H1 (cell line): ENCODE measurements at regions of chr20 and their contacts with region 1.

Region 1: DNA sequence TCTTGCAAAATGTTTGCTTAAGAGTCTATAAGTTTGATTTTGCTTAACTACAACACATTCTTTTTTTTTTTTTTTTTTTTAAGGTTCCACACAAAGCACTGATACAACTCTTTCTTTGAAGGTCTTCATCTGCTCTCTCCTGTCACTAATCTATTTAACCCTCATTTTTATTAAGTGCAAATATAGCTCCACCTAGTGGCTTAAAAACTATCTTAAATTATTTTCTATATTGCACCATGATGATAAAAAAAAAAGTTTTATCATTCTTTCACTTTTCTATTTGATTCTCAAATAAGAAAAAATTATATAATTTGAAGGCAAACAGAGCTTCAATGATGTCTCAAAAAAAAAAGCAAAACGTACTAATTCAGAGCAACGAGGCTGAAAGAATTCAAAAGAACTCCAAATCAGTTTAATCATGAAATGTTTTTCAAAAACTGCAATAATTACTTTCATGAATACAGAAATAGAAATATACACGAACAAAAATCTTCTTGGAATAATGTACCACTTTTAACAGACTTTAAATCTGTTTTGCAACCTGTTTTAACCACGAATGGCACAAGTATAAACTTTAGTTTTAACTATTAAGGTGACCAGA is 12.8 kb downstream of the ESF1 start:
- DNase-seq: no peak
- H3K4me3 ChIP-seq: no peak overlapping the region
- H3K27ac ChIP-seq: no peak overlapping the region
- H3K4me1 ChIP-seq: no peaks in the 10 kb centered on the region
- H3K27me3 ChIP-seq: peaks cover 0 to 1% (median 0%) of the 10 kb centered on the region in 4 experiments; a peak in 1 of 7 replicates
- CTCF ChIP-seq: no peak
- EP300 ChIP-seq: no peak
- POLR2A ChIP-seq: no peak
- RAD21 ChIP-seq: no peak

Region 2: DNA sequence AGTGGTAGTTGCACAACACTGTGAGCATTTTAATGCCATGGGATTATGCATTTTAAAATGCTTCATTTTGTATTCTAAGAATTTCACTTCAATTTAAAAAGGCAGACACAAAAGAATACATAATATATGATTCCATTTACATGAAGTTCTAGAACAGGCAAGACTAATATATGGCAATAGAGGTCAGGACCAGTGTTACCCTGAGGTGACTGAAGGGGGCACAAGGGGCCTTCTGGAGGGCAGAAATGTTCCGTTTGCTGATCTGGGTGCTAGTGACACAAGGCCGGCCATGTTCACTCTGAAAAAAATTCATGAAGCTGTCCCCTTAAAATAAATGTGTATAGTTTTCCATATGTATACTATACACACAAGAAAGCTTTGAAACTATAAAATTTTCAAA is 161.8 kb before region 1 on chr20:
- CTCF ChIA-PET with region 1: interaction called, 22 read pairs
- POLR2A ChIA-PET with region 1: no interaction called
- DNase-seq: no peak
- H3K4me3 ChIP-seq: no peak overlapping the region
- H3K27ac ChIP-seq: no peak overlapping the region
- H3K4me1 ChIP-seq: no peaks in the 10 kb centered on the region
- H3K27me3 ChIP-seq: no peaks in the 10 kb centered on the region
- CTCF ChIP-seq: peak; percentile 66 to 76 (median 68)
- EP300 ChIP-seq: no peak
- POLR2A ChIP-seq: no peak
- RAD21 ChIP-seq: peak; percentile 87 to 91

Region 3: GRCh38 chr20:13684566-13685222 is 87.3 kb before region 1 on chr20:
- CTCF ChIA-PET with region 1: no interaction called
- POLR2A ChIA-PET with region 1: no interaction called
- DNase-seq: no peak
- H3K4me3 ChIP-seq: no peak overlapping the region
- H3K27ac ChIP-seq: no peak overlapping the region
- H3K4me1 ChIP-seq: no peaks in the 10 kb centered on the region
- H3K27me3 ChIP-seq: no peaks in the 10 kb centered on the region; a peak in 1 of 7 replicates
- CTCF ChIP-seq: no peak
- EP300 ChIP-seq: no peak
- POLR2A ChIP-seq: no peak
- RAD21 ChIP-seq: no peak

Region 4: DNA sequence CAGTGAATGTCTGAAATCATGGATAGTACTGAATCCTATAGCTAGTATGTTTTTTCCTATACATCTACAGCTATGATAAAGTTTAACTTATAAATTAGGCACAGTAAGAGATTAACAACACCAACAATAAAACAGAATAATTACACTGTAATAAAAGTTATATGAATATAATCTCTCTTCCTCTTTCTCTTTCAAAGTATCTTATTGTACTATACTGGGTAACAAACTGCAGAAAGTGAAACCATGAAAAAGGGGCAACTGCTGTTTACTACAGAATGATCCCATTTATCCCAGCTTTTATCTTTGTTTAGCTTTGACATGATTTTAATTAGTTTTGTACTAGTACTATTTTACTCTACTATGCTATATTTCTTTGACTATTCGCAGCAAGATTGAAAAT is 13.1 kb before region 1 on chr20:
- CTCF ChIA-PET with region 1: interaction called, 12 read pairs
- POLR2A ChIA-PET with region 1: interaction called, 3 read pairs
- DNase-seq: no peak
- H3K4me3 ChIP-seq: no peak overlapping the region
- H3K27ac ChIP-seq: no peak overlapping the region
- H3K4me1 ChIP-seq: no peaks in the 10 kb centered on the region
- H3K27me3 ChIP-seq: no peaks in the 10 kb centered on the region
- CTCF ChIP-seq: no peak
- EP300 ChIP-seq: no peak
- POLR2A ChIP-seq: no peak
- RAD21 ChIP-seq: no peak